PC-9 (cell line): ENCODE measurements at regions of chr2 and their contacts with region 1.

Region 1: GRCh38 chr2:185952098-185952497 is 213.5 kb downstream of the FSIP2 start:
- DNase-seq: no peak
- H3K4me3 ChIP-seq: no peak overlapping the region
- H3K27ac ChIP-seq: no peak overlapping the region
- H3K4me1 ChIP-seq: no peaks in the 10 kb centered on the region
- H3K27me3 ChIP-seq: no peaks in the 10 kb centered on the region
- CTCF ChIP-seq: no peak

Region 2: DNA sequence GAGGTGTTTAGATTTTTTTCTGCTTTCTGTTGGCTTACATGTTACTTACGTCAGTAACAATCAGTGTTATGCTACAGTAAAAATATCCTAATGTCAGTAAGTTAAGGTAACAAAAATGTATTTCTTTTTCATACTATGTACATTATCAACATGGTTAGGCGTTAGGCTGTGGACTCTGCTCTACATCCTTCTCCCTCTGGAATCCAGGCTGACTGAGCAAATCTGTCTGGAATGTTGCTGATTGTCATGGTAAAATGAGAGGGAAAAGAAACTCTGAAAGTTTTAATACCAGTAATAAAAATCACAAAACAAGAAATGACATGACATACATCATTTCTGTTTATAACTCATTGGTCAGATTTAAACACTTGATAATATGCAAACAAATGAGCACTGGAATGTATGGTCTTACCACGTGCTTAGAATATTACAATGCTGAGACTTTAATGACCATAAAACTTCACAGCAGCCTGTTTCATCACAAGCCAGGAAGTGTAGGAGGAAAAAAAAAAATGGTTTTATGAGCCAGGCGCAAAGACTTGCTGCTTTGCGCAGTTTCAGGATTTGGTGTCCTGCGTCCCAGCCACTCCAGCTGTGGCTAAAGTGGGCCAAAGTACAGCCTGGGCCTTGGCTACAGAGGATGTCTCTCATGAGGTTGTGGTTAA is 38.9 kb after region 1 on chr2:
- CTCF ChIA-PET with region 1: no interaction called
- POLR2A ChIA-PET with region 1: interaction called, 10 read pairs
- intact Hi-C with region 1: no loop called
- DNase-seq: no peak
- H3K4me3 ChIP-seq: no peak overlapping the region
- H3K27ac ChIP-seq: no peak overlapping the region
- H3K4me1 ChIP-seq: no peaks in the 10 kb centered on the region
- H3K27me3 ChIP-seq: no peaks in the 10 kb centered on the region
- CTCF ChIP-seq: no peak